GM10248 (cell line): ENCODE measurements at regions of chr9 and their contacts with region 1.

Region 1: GRCh38 chr9:2919347-2919746 is 75.5 kb upstream of the PUM3 start:
- DNase-seq: no peak
- CTCF ChIP-seq: no peak

Region 2: GRCh38 chr9:2764353-2764752 is 155.0 kb before region 1 on chr9:
- CTCF ChIA-PET with region 1: no interaction called
- POLR2A ChIA-PET with region 1: no interaction called
- DNase-seq: peak; percentile 29
- CTCF ChIP-seq: no peak

Region 3: DNA sequence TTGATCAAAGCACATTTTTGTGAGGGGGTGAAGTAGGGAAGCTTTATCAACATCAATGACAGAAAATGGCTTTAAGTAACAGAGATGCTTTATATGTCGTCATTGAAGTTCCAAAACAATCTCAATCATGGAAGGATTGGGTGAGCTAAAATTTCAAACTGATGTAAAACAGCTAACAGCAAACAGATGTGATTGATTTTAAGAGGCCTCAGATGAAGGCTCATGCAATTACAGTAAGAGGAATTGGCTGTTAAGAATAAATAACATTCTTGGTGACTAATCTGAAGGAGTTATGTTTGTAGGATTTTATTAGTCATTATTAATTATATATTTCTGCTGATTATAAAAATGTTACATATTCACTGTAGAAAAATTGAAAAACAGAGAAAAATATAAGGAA is 11.9 kb before region 1 on chr9:
- CTCF ChIA-PET with region 1: interaction called, 10 read pairs
- POLR2A ChIA-PET with region 1: no interaction called
- DNase-seq: no peak
- CTCF ChIP-seq: no peak